ENCODE measurements at regions of chr20 and their contacts with region 1.

Region 1: GRCh38 chr20:31630187-31630790 is 7.4 kb upstream of the COX4I2 start:
- DNase-seq: no peak
- CTCF ChIP-seq: no peak

Region 2: GRCh38 chr20:31566658-31567379 is 63.5 kb before region 1 on chr20:
- CTCF ChIA-PET with region 1: interaction called, 30 read pairs
- POLR2A ChIA-PET with region 1: no interaction called
- DNase-seq: no peak
- CTCF ChIP-seq: no peak

Region 3: GRCh38 chr20:31617432-31618104 is 12.7 kb before region 1 on chr20:
- CTCF ChIA-PET with region 1: interaction called, 68 read pairs
- POLR2A ChIA-PET with region 1: no interaction called
- DNase-seq: peak; percentile 59
- CTCF ChIP-seq: no peak

Region 4: DNA sequence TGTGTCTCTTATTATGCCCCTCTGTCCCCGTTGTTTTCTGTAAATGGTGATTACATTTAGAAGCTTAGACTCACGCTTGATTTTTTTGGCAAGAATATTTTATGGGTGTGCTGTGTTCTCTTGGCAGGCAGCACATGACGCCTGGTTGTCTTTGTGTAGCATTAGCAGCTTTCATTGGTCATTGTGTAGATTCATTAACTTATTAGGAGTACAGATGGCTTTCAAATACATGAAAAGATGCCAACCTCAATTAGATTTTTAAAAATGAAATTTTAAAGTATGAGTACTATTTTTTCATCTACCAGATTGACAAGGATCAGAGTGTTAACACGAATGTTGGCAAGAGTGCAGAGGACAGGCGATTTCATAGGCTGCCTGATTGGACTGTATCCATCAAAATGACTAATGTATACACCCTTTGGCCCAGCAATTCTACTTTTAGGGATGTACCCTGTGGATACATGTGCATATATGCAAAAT is 22.7 kb after region 1 on chr20:
- CTCF ChIA-PET with region 1: interaction called, 17 read pairs
- POLR2A ChIA-PET with region 1: no interaction called
- DNase-seq: no peak
- CTCF ChIP-seq: no peak

Region 5: DNA sequence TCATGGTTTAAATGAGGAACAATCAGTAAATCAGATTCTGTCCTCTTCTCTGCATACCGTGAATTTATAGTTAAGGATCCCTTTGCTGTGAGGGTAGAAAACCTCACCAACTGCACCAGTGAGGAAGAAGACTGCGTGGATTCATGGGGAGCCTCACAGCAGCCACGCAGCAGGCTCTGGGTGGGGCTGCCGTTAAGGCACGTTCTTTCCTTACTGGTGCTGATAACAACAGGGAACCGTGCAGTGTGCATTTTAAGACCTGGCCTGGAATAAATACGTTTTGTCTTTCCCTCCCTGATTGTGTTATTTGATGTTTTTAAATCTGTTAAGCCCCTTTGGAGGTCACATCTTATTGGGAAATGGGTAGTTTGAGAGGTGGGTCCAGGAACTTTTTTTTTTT is 171.2 kb after region 1 on chr20:
- CTCF ChIA-PET with region 1: no interaction called
- POLR2A ChIA-PET with region 1: no interaction called
- DNase-seq: no peak
- CTCF ChIP-seq: no peak

Measured in GM10248 (cell line).